ENCODE measurements at regions of chr18 and their contacts with region 1.

Region 1: DNA sequence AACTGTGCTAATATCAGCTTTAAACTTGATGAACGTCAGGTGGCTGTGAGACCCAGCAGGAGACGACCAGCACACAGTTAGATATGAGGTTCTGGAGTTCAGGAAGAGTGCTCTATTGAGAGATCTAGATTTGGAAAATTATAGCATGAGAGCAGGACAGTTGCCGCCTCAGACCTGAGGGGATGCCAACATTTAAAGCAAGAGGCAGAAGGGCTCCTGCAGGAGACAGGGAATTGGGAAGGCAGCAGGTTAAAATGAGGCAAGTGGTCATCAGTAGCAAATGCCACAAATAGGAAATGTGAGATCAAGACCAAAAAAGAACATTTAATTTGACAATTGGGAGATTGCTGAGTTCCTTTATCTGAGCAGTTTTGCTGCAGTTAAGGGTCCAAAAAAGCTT is 471.9 kb downstream of the TGIF1 start:
- DNase-seq: no peak
- H3K4me3 ChIP-seq: no peak overlapping the region
- H3K27ac ChIP-seq: no peak overlapping the region
- H3K4me1 ChIP-seq: peaks cover 45% of the 10 kb centered on the region
- CTCF ChIP-seq: no peak

Region 2: DNA sequence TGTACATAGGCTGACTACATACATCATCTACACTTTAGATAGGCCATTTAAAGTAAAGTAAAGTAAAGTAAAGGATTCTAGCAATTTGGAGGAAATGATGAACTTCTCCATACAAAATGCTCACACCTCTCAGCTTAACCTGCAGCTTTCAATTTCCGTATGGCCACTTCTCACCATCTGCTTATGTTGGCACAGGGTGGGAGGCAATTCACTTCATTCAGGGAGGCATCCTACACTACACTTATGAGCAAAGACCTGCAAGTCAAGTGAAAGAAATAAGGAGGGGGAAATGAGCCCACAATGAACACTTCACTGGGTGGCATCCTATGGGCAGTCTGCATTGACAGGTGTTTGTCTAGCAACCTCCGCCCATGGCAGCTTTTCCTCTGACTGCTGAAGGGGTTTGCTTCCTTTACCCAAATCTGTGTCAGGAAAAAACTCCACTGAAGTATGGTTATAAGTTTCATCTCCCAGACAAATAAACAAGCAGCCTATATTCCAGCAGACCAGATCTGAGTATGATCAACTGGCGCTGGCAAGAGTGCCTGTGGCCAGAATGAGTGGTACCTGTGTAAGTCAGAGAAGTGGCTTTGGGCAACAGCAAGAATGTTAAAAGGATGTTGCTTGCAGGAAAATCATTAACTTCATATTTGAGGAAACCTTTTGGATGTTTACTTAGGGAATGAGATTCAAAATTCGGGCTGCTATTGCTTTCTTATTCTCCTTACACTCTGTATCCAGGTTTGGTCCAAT is 22.8 kb before region 1 on chr18:
- CTCF ChIA-PET with region 1: no interaction called
- POLR2A ChIA-PET with region 1: interaction called, 13 read pairs
- intact Hi-C with region 1: no loop called
- DNase-seq: no peak
- H3K4me3 ChIP-seq: no peak overlapping the region
- H3K27ac ChIP-seq: no peak overlapping the region
- H3K4me1 ChIP-seq: peaks cover 4% of the 10 kb centered on the region
- CTCF ChIP-seq: no peak

Region 3: DNA sequence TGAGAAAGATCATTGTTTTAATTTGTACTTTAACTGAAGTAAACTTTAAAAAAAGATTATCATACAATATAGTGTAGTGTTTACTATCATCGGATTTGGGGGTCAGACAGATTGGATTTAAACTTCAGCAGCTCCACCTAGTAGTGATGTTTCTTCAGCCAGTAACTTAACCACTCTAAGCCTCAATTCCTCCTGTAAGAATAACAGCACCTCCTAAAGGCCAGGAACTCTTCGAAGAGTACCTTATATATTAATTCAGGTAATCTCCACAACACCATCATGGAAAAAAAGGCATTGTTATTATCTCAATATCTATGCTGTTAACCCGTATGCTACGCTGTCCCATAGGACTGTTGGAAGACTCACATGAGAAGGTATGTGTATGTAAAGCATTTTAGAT is 602.3 kb after region 1 on chr18:
- CTCF ChIA-PET with region 1: no interaction called
- POLR2A ChIA-PET with region 1: no interaction called
- intact Hi-C with region 1: no loop called
- DNase-seq: no peak
- H3K4me3 ChIP-seq: no peak overlapping the region
- H3K27ac ChIP-seq: no peak overlapping the region
- H3K4me1 ChIP-seq: no peaks in the 10 kb centered on the region
- CTCF ChIP-seq: no peak